CD4-positive, alpha-beta memory T cell (primary cell): ENCODE measurements at regions of chr2 and their contacts with region 1.

Region 1: DNA sequence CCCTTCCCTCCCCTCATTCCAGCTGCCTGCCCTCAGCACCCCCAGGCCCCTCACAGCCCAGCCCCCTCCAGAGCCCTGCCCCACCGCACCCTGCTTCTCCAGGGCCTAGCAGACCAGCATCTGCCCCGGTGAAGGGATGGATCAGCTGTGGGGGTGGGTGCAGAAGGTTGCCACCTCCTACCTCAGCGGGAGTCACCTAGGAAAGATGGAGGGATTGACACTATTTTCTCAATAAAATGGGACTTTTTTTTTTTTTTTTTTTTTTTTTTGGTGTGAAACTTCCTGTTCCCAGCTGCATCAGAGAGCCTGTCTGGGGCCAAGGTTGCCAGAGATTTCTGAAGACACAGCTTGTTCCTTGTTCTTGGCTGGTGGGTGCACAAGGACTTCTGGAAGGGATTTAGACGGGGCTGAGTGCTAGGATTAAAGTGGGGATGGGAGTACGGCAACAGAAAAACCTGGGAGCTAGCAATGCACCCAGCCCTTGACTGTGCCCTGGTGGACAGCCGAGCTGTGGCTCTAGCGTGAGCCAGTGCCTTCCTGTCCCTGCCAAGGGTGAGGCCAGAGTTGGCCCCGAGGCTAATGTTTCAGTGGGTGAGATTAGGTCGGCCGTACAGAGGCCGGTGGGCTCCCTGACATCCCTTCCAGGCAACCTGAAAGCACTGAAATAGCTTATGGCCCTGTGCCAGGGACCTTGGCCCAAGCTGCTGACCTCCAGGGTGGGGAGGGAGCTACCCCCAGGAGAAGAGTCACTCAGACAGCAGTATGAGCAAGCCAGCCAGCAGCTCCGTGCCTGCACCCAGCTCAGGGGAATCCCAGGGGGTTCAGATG is 4.6 kb downstream of the B3GNT7 start:
- DNase-seq: no peak
- H3K4me3 ChIP-seq: no peak overlapping the region
- H3K4me3 Mint-ChIP-seq: no peak overlapping the region
- H3K27ac ChIP-seq: no peak overlapping the region
- H3K27ac Mint-ChIP-seq: peak overlapping the region in 1 of 7 donors; percentile 53
- H3K4me1 ChIP-seq: no peaks in the 10 kb centered on the region
- H3K4me1 Mint-ChIP-seq: peaks cover 0 to 8% (median 1%) of the 10 kb centered on the region in 4 donors
- H3K27me3 ChIP-seq: no peaks in the 10 kb centered on the region
- H3K27me3 Mint-ChIP-seq: peaks cover 8 to 18% of the 10 kb centered on the region in 2 donors

Region 2: GRCh38 chr2:231104115-231104713 is 295.9 kb before region 1 on chr2:
- CTCF ChIA-PET with region 1: interaction called, 4 read pairs
- POLR2A ChIA-PET with region 1: no interaction called
- intact Hi-C with region 1: loop called (anchors 1 kb)
- DNase-seq: peak; percentile 35 to 54 (median 48)
- H3K4me3 ChIP-seq: no peak overlapping the region
- H3K4me3 Mint-ChIP-seq: no peak overlapping the region
- H3K27ac ChIP-seq: no peak overlapping the region
- H3K27ac Mint-ChIP-seq: peak overlapping the region in 1 of 7 donors; percentile 6
- H3K4me1 ChIP-seq: no peaks in the 10 kb centered on the region
- H3K4me1 Mint-ChIP-seq: peaks cover 0 to 4% (median 2%) of the 10 kb centered on the region in 4 donors
- H3K27me3 ChIP-seq: no peaks in the 10 kb centered on the region
- H3K27me3 Mint-ChIP-seq: no peaks in the 10 kb centered on the region

Region 3: DNA sequence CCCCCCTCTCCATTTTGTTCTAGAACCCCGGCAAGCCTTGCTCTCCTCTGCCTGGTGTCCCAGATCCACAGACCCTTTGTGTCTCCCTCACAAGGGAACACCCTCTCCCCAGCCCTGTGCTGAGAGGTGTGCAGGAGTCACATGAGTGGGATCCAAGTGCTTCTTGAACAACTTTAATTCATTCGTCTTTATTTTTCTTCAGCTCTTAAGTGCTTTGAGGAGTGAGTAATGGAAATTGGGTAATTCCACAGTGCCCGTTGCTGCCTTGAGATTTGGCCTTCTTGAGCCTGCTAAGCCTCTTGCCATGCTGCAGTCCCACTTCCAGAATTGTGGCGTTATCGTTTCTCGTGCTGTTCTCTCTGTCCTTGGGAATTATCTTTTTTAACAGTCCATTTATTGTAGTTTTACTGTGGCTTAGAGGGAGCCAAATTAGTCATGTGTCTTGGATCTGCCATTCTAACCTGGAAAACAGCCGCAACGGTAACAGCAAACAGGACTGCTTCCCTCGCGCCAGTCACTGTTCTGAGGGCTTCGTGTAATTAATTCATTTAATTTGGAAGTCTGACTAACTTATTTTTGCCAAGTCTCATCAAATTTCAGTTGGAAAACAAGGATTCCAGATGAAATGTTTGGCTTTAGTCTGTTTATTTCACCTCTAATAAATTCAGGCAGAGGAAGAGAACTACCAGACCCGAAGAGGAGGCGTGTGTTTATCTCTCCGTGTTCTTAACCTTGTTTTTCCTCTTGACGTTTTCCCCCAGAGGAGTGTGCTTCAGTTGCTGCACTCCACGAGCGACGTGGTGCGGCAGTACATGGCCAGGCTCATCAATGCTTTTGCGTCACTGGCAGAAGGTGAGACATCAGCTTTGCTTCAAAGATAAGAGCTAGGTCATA is 129.6 kb before region 1 on chr2:
- CTCF ChIA-PET with region 1: no interaction called
- POLR2A ChIA-PET with region 1: no interaction called
- intact Hi-C with region 1: no loop called
- DNase-seq: no peak
- H3K4me3 ChIP-seq: no peak overlapping the region
- H3K4me3 Mint-ChIP-seq: no peak overlapping the region
- H3K27ac ChIP-seq: no peak overlapping the region
- H3K27ac Mint-ChIP-seq: no peak overlapping the region
- H3K4me1 ChIP-seq: no peaks in the 10 kb centered on the region
- H3K4me1 Mint-ChIP-seq: no peaks in the 10 kb centered on the region
- H3K27me3 ChIP-seq: no peaks in the 10 kb centered on the region
- H3K27me3 Mint-ChIP-seq: peaks cover 2 to 6% of the 10 kb centered on the region in 2 donors

Region 4: GRCh38 chr2:231348173-231348572 is 51.9 kb before region 1 on chr2:
- CTCF ChIA-PET with region 1: no interaction called
- POLR2A ChIA-PET with region 1: no interaction called
- intact Hi-C with region 1: no loop called
- DNase-seq: no peak
- H3K4me3 ChIP-seq: no peak overlapping the region
- H3K4me3 Mint-ChIP-seq: no peak overlapping the region
- H3K27ac ChIP-seq: no peak overlapping the region
- H3K27ac Mint-ChIP-seq: no peak overlapping the region
- H3K4me1 ChIP-seq: no peaks in the 10 kb centered on the region
- H3K4me1 Mint-ChIP-seq: no peaks in the 10 kb centered on the region
- H3K27me3 ChIP-seq: no peaks in the 10 kb centered on the region
- H3K27me3 Mint-ChIP-seq: peaks cover 4 to 13% of the 10 kb centered on the region in 2 donors